Esophagus muscularis mucosa (tissue), 4 donors: ENCODE measurements at regions of chr6 and their contacts with region 1.

Region 1: GRCh38 chr6:52598123-52598823 is 21.4 kb upstream of the TRAM2 start:
- DNase-seq: no peak
- H3K4me3 ChIP-seq: peak overlapping the region; percentile 21 to 46 (median 32)
- H3K27ac ChIP-seq: peak overlapping the region; percentile 15 to 53 (median 37)
- H3K4me1 ChIP-seq: peaks cover 30 to 44% (median 38%) of the 10 kb centered on the region in 4 donors
- H3K27me3 ChIP-seq: no peaks in the 10 kb centered on the region
- CTCF ChIP-seq: peak; percentile 67 to 77 (median 68)
- EP300 ChIP-seq: no peak
- POLR2A ChIP-seq: no peak

Region 2: GRCh38 chr6:51996296-51996947 is 601.9 kb before region 1 on chr6:
- intact Hi-C with region 1: no loop called
- DNase-seq: peak; percentile 26
- H3K4me3 ChIP-seq: no peak overlapping the region
- H3K27ac ChIP-seq: no peak overlapping the region
- H3K4me1 ChIP-seq: peaks cover 0 to 21% (median 9%) of the 10 kb centered on the region in 4 donors
- H3K27me3 ChIP-seq: no peaks in the 10 kb centered on the region
- CTCF ChIP-seq: no peak
- EP300 ChIP-seq: no peak
- POLR2A ChIP-seq: no peak

Region 3: GRCh38 chr6:52482903-52483670 is 115.2 kb before region 1 on chr6:
- intact Hi-C with region 1: no loop called
- DNase-seq: peak; percentile 79
- H3K4me3 ChIP-seq: no peak overlapping the region
- H3K27ac ChIP-seq: no peak overlapping the region
- H3K4me1 ChIP-seq: no peaks in the 10 kb centered on the region
- H3K27me3 ChIP-seq: no peaks in the 10 kb centered on the region
- CTCF ChIP-seq: no peak
- EP300 ChIP-seq: no peak
- POLR2A ChIP-seq: no peak

Region 4: DNA sequence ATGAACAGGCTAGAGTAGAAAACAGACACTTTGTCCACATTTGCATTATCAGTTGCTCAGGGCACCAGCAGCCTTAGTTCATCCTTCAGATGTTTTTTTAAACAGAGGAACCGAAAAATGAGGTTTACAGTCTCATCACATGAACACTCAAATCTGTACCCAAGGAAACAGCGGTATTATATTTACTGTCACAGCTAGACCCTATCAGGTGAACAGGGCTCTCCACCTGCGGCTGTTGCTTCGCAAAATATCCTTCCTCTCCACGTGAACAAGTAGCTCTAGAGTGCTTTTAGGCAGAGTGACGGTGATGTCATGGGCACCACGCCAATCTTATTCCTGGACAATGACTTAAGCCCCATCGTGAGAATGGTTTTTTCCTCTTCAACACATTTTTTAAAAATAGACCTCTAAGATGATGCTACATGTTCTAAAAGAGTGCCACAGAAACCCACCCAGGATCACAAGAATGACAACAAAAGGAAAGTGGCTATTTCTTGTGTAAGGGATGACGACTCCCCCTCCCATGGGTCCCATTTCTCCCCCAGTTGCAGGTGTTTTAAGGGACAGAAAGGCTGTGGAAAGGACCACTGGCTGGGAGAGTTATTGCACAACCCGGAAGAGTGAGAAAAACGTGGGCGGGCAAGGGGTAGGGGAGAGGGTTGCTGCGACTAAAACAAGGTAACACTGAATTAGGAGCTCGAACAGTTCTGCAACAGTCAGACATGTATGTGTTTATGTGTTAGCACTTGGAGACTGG is 100.4 kb before region 1 on chr6:
- intact Hi-C with region 1: loop called (anchors 5 kb)
- DNase-seq: no peak
- H3K4me3 ChIP-seq: no peak overlapping the region
- H3K27ac ChIP-seq: peak overlapping the region in 2 of 4 donors; percentile 16 to 48
- H3K4me1 ChIP-seq: peaks cover 29 to 34% (median 32%) of the 10 kb centered on the region in 4 donors
- H3K27me3 ChIP-seq: no peaks in the 10 kb centered on the region
- CTCF ChIP-seq: no peak
- EP300 ChIP-seq: no peak
- POLR2A ChIP-seq: no peak

Region 5: GRCh38 chr6:52577022-52577777 is 21.1 kb before region 1 on chr6 and contains the start of gene TRAM2:
- intact Hi-C with region 1: loop called (anchors 2 kb)
- DNase-seq: peak; percentile 95
- H3K4me3 ChIP-seq: peak within 1 kb of the TSS; percentile 88 to 92 (median 90)
- H3K27ac ChIP-seq: peak within 1 kb of the TSS; percentile 98 to 100 (median 99)
- H3K4me1 ChIP-seq: peaks cover 47 to 60% (median 54%) of the 10 kb centered on the region in 4 donors
- H3K27me3 ChIP-seq: no peaks in the 10 kb centered on the region
- CTCF ChIP-seq: peak in 2 of 3 experiments; percentile 7 to 32
- EP300 ChIP-seq: no peak
- POLR2A ChIP-seq: peak; percentile 49
- total RNA-seq, gene TRAM2: 13.3 to 23.8 (median 18.5) TPM

Region 6: GRCh38 chr6:52664186-52664990 is 66.1 kb after region 1 on chr6:
- intact Hi-C with region 1: loop called (anchors 5 kb)
- DNase-seq: peak; percentile 96
- H3K4me3 ChIP-seq: peak overlapping the region; percentile 57 to 86 (median 76)
- H3K27ac ChIP-seq: peak overlapping the region; percentile 63 to 86 (median 80)
- H3K4me1 ChIP-seq: peaks cover 16 to 20% (median 16%) of the 10 kb centered on the region in 4 donors
- H3K27me3 ChIP-seq: no peaks in the 10 kb centered on the region
- CTCF ChIP-seq: no peak
- EP300 ChIP-seq: no peak
- POLR2A ChIP-seq: peak; percentile 27